ENCODE measurements at regions of chr7 and their contacts with region 1.

Region 1: GRCh38 chr7:29408841-29409243 is 154.8 kb upstream of the PRR15 start:
- DNase-seq: peak; percentile 72
- H3K4me3 Mint-ChIP-seq: no peak overlapping the region
- H3K27ac Mint-ChIP-seq: no peak overlapping the region
- H3K4me1 Mint-ChIP-seq: no peaks in the 10 kb centered on the region
- H3K27me3 Mint-ChIP-seq: peaks cover 3% of the 10 kb centered on the region

Region 2: DNA sequence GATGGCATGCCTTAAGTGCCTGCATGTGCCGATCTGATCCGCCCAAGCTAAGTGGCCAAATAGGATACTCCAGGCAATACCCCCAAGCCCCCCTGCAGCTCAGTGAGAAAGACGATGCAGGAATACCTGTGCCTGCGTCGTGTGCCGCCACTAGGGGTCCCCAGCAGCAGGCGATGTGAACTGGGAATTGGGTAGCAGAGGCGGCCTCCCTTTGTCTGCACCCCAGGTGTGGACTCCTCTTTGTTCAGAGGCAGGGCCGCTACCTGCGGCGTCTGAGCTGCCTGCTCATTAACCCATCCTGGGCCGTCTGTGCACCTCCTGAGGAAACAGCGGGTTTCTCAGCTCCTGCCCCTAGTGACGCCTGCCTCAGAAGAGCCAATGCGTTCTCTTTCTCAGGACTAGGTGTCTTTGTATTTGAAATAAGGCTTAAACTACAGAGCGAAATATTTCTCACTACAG is 219.1 kb before region 1 on chr7:
- CTCF ChIA-PET with region 1: interaction called, 10 read pairs
- POLR2A ChIA-PET with region 1: interaction called, 4 read pairs
- DNase-seq: peak; percentile 55
- H3K4me3 Mint-ChIP-seq: no peak overlapping the region
- H3K27ac Mint-ChIP-seq: no peak overlapping the region
- H3K4me1 Mint-ChIP-seq: peaks cover 2% of the 10 kb centered on the region
- H3K27me3 Mint-ChIP-seq: peaks cover 35% of the 10 kb centered on the region